Right ventricle myocardium inferior (tissue), 1 donor: ENCODE measurements at regions of chr9 and their contacts with region 1.

Region 1: DNA sequence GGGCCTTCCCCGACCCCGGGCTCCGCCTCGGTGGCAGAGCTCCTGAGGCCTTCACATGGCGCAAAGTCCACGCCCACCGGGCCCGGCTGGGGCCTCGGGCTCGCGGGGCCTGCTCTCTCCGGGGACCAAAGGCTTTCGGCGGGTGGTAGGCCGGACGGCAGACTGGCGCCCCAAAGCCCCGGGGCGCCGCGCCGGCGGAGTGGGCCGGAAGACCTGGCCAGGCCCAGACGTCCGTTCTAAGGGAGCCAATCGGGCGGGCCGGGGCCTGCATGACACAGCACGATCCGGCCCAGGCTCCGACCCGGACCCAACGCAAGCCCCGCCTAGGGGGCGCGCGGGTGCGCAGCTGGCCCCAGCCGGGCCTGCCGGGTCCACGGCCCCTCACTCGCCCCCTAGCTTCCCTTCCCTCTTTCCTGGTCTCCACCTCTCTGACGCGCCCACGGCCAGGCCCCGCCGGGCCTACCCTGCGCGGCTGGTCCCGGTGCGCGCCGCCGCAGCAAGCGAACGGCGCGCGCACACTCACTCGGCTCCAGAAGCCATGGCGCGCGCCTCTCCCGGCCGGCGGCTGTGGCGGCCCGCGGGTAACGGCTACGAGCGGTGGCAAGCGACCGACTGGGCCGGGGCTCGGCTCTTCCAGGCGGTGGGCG is 488 bp downstream of the VCP start:
- DNase-seq: peak; percentile 96
- ATAC-seq: peak; percentile 83

Region 2: GRCh38 chr9:34989003-34989945 is 82.7 kb before region 1 on chr9 and contains the start of gene DNAJB5:
- intact Hi-C with region 1: loop called (anchors 2 kb)
- DNase-seq: peak; percentile 99
- ATAC-seq: peak; percentile 89
- total RNA-seq, gene DNAJB5: 66.5 TPM

Region 3: GRCh38 chr9:34994260-34994899 is 77.6 kb before region 1 on chr9:
- intact Hi-C with region 1: loop called (anchors 2 kb)
- DNase-seq: no peak
- ATAC-seq: no peak

Region 4: DNA sequence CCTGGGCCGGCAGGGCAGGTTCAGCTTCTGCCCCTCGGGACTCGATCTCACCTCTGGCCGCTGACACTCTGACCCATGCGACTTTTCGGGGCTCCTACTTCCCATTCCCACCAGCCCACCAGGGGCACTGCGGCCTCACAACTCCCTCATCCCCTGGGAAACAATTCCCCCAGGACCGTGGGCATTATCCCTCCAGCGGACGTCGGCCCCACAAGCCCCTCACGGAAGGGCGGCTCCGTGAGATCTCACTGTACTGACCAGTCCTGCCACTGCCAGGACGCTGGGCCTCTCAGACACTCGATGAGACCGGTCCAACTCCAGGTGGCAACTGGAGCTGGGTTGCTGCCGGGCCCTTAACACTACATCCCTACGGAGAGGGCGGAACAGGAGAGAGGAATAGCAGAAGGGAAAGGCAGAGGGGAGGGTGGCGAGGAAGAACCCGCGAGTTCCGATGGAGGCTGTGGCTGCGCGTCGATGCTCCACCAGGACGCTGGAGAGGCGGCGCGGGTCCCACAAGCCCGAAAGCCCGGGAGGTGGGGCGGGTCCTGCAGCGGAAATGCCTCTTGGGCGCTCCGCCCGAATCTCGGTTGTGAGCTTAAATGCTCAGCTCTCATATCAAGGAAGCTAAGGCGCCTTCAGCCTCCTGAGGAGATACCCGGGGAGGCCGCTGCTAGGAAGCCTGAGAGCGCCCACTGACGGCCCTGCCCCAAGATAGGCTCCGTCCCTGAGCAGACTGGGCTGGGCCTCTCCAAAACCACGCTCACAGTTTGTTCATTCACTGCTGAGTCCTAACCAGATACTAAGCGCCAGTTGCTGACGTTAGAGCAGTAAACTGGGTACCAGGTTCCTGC is 35.9 kb before region 1 on chr9:
- intact Hi-C with region 1: no loop called
- DNase-seq: peak; percentile 82
- ATAC-seq: peak; percentile 73

Region 5: DNA sequence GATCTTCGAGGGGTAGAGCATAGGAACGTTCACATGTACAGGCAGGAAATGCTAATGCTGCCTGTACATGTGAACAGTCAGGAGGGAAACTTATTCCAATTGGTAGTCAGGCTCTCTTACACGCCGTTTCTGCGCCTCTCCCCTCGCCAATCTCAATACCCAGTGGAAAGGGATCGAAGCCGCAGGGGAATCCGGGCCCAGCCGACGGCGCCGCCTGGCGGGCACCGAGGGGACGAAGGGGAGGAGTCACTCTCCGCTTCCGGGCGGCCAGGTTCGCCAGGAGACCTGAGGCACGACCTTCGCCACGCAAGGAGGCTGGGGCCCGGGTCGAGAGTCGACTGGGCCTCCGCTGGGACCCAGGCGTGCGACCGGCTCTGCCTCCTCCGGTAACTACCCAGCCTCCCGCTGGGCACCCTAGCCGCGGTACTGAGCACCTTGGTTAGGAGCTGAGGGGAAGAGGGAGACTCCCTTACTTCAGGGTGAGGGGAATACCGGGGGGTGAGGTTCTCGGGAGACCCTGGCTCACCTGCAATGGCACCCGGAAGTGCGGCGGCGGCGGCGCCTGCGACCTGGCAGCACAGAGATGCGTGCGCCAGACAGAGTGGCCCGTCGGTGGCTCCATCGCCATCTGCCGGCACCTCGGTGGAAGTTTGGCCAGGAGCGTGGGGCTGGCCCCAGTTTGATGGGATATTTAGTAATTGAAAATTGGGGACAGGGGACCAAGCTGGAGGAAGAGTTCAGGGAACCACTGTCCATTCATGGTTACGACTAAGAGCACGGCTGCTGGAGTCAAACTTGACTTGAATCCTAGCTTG is 24.3 kb after region 1 on chr9 and contains the start of gene PIGO:
- intact Hi-C with region 1: loop called (anchors 2 kb)
- DNase-seq: peak; percentile 96
- ATAC-seq: peak; percentile 93
- total RNA-seq, gene PIGO: 8.5 TPM

Region 6: GRCh38 chr9:35452481-35452880 is 380.5 kb after region 1 on chr9:
- intact Hi-C with region 1: no loop called
- DNase-seq: no peak
- ATAC-seq: no peak